Activated CD8-positive, alpha-beta T cell treated with anti-CD3 and anti-CD28 coated beads for 36 hours (primary cell): ENCODE measurements at regions of chr2 and their contacts with region 1.

Region 1: GRCh38 chr2:219253753-219254590 is at the start of gene TUBA4A:
- DNase-seq: peak; percentile 92
- ATAC-seq: peak; percentile 73
- H3K4me3 Mint-ChIP-seq: peak within 1 kb of the TSS; percentile 77
- H3K27ac Mint-ChIP-seq: peak within 1 kb of the TSS; percentile 94
- H3K4me1 Mint-ChIP-seq: peaks cover 46% of the 10 kb centered on the region
- H3K27me3 Mint-ChIP-seq: no peaks in the 10 kb centered on the region
- CTCF ChIP-seq: no peak
- total RNA-seq, gene TUBA4A: 226 TPM

Region 2: DNA sequence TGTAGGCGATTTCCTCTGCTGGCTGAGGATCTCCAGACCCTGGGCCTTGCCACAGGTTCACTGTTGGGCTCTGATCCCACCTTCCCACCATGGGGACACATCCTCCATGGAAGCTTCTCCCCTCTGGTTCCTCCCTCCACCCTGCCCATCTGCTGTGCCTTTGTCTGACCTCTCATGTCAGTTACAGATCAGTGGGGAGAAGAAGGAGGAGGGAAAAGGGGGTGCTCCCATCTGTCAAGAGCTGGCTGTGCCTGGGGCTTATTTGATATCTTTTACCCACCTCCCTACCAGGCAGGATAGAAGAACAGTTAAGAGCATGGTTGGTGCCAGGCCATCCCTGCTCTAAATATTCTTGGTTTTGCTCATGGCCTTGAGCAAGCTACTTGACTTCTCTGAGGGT is 12.9 kb after region 1 on chr2:
- CTCF ChIA-PET with region 1: no interaction called
- POLR2A ChIA-PET with region 1: interaction called, 19 read pairs
- intact Hi-C with region 1: no loop called
- DNase-seq: no peak
- ATAC-seq: no peak
- H3K4me3 Mint-ChIP-seq: no peak overlapping the region
- H3K27ac Mint-ChIP-seq: no peak overlapping the region
- H3K4me1 Mint-ChIP-seq: no peaks in the 10 kb centered on the region
- H3K27me3 Mint-ChIP-seq: no peaks in the 10 kb centered on the region
- CTCF ChIP-seq: no peak

Region 3: DNA sequence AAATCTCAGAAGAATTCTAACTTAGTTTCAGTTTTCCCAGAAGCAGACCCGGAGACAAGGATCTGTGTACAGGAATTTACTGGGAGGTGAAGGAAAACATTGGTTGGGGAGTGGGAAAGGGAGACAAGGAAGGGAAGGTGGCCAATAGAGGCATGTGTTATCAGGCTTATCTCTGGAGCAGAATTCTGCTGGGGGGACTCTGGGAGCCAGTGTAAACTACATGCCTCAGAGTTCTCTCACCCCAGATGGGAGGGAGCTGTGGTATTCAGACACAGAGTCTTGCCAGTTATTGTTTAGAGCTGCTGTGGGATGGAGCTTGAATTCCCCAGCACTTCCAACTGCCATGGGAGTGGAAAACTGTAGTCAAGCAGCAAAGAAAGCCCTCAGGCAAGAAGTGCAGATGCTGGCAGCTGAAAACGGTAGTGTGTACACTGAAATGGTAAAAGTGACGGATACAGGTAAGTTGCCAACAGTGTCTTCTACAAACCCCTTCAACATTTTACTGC is 114.8 kb after region 1 on chr2:
- CTCF ChIA-PET with region 1: no interaction called
- POLR2A ChIA-PET with region 1: no interaction called
- intact Hi-C with region 1: no loop called
- DNase-seq: no peak
- ATAC-seq: no peak
- H3K4me3 Mint-ChIP-seq: no peak overlapping the region
- H3K27ac Mint-ChIP-seq: no peak overlapping the region
- H3K4me1 Mint-ChIP-seq: no peaks in the 10 kb centered on the region
- H3K27me3 Mint-ChIP-seq: no peaks in the 10 kb centered on the region
- CTCF ChIP-seq: no peak